GM12878 (cell line): ENCODE measurements at regions of chr2 and their contacts with region 1.

Region 1: DNA sequence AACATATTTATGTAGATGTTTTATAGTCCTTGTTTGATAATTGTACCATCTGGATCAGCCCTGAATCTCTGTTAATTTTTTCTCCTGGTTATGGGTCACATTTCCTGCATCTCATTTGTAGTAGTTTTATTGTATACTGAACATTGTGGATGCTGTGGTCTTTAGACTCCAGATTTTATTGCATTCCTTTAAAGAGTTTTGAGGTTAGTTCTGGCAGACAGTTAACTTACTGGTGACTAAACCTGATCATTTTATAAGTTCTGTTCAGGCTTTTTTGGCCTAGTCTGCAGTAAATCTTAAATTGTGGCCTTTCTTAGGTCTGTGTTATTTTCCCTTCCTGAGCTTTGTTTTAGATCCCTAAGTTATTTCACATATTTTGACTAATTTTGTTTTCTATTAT is 84.3 kb downstream of the FANCL start:
- DNase-seq: no peak
- ATAC-seq: no peak
- H3K4me3 ChIP-seq: no peak overlapping the region
- H3K27ac ChIP-seq: no peak overlapping the region
- H3K4me1 ChIP-seq: no peaks in the 10 kb centered on the region
- H3K27me3 ChIP-seq: no peaks in the 10 kb centered on the region
- CTCF ChIP-seq: no peak
- EP300 ChIP-seq: no peak
- POLR2A ChIP-seq: no peak
- RAD21 ChIP-seq: no peak

Region 2: GRCh38 chr2:58131191-58132011 is 25.4 kb before region 1 on chr2:
- CTCF ChIA-PET with region 1: interaction called, 5 read pairs
- POLR2A ChIA-PET with region 1: no interaction called
- RAD21 ChIA-PET with region 1: no interaction called
- SMC1A ChIA-PET with region 1: interaction called, 10 read pairs
- in situ Hi-C with region 1: no loop called
- intact Hi-C with region 1: no loop called
- DNase-seq: no peak
- ATAC-seq: no peak
- H3K4me3 ChIP-seq: no peak overlapping the region
- H3K27ac ChIP-seq: no peak overlapping the region
- H3K4me1 ChIP-seq: no peaks in the 10 kb centered on the region
- H3K27me3 ChIP-seq: no peaks in the 10 kb centered on the region
- CTCF ChIP-seq: peak in 1 of 3 experiments; percentile 29; a peak in 1 of 6 replicates
- EP300 ChIP-seq: no peak
- POLR2A ChIP-seq: no peak
- RAD21 ChIP-seq: peak; percentile 33; the same call in 1 of the 2 replicates

Region 3: DNA sequence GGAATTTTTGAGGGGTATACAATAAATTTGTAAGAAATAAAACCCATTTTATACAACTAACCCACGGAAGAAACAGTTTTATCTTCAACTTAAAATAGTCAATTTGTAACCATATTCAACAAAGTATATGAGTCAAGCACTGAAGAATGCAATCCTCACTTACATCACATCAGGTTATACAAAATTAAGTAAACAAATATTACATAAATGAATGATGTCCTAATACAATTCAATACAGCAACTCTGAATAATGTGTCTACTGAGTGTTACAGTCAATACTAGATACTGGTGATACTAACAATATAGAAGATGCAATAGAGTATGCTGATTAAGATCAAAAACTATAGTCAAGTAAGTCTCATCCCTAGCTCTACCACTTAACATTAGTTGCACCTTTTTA is 25.7 kb after region 1 on chr2:
- CTCF ChIA-PET with region 1: no interaction called
- POLR2A ChIA-PET with region 1: no interaction called
- RAD21 ChIA-PET with region 1: no interaction called
- SMC1A ChIA-PET with region 1: no interaction called
- in situ Hi-C with region 1: no loop called
- intact Hi-C with region 1: no loop called
- DNase-seq: no peak
- ATAC-seq: no peak
- H3K4me3 ChIP-seq: no peak overlapping the region
- H3K27ac ChIP-seq: no peak overlapping the region
- H3K4me1 ChIP-seq: no peaks in the 10 kb centered on the region
- H3K27me3 ChIP-seq: no peaks in the 10 kb centered on the region
- CTCF ChIP-seq: no peak
- EP300 ChIP-seq: no peak
- POLR2A ChIP-seq: no peak
- RAD21 ChIP-seq: no peak

Region 4: DNA sequence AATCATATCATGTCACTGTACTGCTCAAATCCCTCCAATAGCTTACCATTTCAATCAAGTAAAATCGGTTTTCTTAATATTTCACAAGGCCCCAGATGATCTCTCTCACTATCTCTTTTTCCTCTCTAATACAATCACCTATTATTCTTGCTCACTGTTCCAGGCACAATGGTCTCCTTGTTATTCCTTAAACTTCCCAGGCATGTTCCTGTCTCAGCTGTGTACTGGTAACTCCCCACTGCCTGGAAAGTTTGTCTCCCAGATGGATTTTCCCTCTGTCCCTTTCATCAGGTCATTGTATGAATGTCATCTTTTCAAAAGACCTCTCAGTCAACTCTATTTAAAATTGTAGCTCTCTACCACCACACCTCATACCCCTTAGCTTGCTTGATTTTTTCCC is 115.0 kb after region 1 on chr2:
- CTCF ChIA-PET with region 1: no interaction called
- POLR2A ChIA-PET with region 1: no interaction called
- RAD21 ChIA-PET with region 1: no interaction called
- SMC1A ChIA-PET with region 1: no interaction called
- in situ Hi-C with region 1: no loop called
- intact Hi-C with region 1: no loop called
- DNase-seq: no peak
- ATAC-seq: no peak
- H3K4me3 ChIP-seq: no peak overlapping the region
- H3K27ac ChIP-seq: no peak overlapping the region
- H3K4me1 ChIP-seq: no peaks in the 10 kb centered on the region
- H3K27me3 ChIP-seq: no peaks in the 10 kb centered on the region
- CTCF ChIP-seq: no peak
- EP300 ChIP-seq: no peak
- POLR2A ChIP-seq: no peak
- RAD21 ChIP-seq: no peak

Region 5: GRCh38 chr2:58508006-58508405 is 351.2 kb after region 1 on chr2:
- CTCF ChIA-PET with region 1: no interaction called
- POLR2A ChIA-PET with region 1: no interaction called
- RAD21 ChIA-PET with region 1: no interaction called
- SMC1A ChIA-PET with region 1: no interaction called
- in situ Hi-C with region 1: no loop called
- intact Hi-C with region 1: no loop called
- DNase-seq: no peak
- ATAC-seq: no peak
- H3K4me3 ChIP-seq: no peak overlapping the region
- H3K27ac ChIP-seq: no peak overlapping the region
- H3K4me1 ChIP-seq: no peaks in the 10 kb centered on the region
- H3K27me3 ChIP-seq: no peaks in the 10 kb centered on the region
- CTCF ChIP-seq: no peak
- EP300 ChIP-seq: no peak
- POLR2A ChIP-seq: no peak
- RAD21 ChIP-seq: no peak